Psoas muscle (tissue), 8 donors: ENCODE measurements at regions of chr3 and their contacts with region 1.

Region 1: GRCh38 chr3:9749645-9750555 is at the start of gene OGG1:
- DNase-seq: peak; percentile 97 to 98
- ATAC-seq: peak; percentile 98 to 99 (median 98)
- H3K4me3 ChIP-seq: peak within 1 kb of the TSS; percentile 79
- H3K27ac ChIP-seq: peak within 1 kb of the TSS; percentile 86
- H3K4me1 ChIP-seq: peaks cover 19% of the 10 kb centered on the region
- H3K27me3 ChIP-seq: no peaks in the 10 kb centered on the region
- CTCF ChIP-seq: no peak
- total RNA-seq, gene OGG1: 6.9 to 9.5 (median 8.1) TPM

Region 2: DNA sequence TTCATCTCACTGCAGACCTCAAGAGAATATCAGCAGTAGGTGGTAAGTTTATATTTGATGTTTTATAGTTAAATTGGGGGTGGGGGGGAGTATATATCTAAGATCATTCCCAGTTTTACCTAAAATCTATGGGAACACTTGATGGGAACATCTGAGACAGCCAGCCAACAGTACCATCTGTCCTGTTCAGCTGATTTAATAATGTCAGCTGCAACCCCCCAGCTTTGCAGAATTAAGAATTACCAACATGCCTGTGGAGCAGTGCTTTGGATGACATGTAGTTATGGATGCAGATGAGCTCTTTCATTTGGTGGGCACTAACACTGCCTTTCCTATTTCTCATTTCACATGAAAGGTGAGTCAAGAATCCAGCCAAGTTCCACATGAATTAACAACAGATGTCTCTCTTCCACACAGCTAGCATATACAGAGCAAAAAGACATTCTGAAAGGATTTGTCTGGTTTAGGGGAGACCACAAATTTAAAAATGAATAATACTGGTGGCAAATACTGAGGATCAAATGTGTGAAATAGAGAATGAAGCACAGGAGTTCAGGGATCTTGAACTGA is 276.3 kb before region 1 on chr3:
- intact Hi-C with region 1: no loop called
- DNase-seq: no peak
- ATAC-seq: no peak
- H3K4me3 ChIP-seq: no peak overlapping the region
- H3K27ac ChIP-seq: no peak overlapping the region
- H3K4me1 ChIP-seq: no peaks in the 10 kb centered on the region
- H3K27me3 ChIP-seq: no peaks in the 10 kb centered on the region
- CTCF ChIP-seq: no peak

Region 3: DNA sequence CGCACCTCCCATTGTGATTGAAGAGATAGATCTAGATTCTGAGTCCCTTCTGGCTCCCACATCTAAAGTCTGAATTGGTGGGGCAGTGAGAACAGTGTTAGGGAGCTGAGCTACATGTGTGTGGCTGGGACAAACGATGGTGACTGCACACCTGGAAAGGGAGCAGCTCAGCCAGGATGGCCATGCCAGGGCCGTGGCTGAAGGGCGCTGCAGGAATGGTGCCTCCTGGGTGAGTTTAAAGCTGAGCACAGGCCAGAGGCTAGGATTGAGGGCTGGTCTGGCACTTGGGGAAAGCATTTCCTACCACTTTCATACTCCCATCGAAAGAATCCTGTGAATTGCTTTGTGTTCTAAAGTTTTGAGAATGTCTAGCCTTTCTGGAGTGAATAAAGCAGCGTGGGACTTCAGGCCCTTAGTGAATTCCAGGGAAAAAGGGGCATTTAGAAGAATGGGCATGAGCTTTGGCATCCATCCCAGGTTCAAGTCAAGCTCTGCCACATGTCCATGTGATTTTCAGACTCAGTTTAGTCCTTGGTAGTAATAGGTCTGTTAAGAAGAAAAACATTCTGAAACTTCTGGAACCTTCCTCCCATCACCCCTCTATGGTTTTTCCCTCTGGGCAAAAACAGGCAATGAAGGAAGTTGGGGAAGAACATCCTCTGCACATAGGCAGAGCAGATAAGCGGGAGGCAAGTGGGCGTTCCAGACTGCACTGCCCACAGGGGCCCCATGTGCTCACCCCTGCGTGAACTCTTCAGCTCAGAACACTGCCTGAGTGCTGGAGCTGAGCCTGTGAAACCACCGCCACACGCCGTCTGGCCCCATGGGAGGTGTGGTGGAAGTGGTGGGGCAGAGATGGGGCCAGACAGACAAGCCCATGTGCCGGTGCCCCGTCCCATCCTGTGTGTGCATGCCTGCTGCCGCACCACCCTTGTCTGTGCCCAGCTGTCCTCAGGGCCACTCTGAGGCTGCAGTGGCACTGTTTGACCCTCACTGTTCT is 59.1 kb before region 1 on chr3:
- intact Hi-C with region 1: no loop called
- DNase-seq: no peak
- ATAC-seq: no peak
- H3K4me3 ChIP-seq: no peak overlapping the region
- H3K27ac ChIP-seq: no peak overlapping the region
- H3K4me1 ChIP-seq: no peaks in the 10 kb centered on the region
- H3K27me3 ChIP-seq: no peaks in the 10 kb centered on the region
- CTCF ChIP-seq: no peak

Region 4: GRCh38 chr3:9731206-9732079 is 18.5 kb before region 1 on chr3 and contains the start of gene BRPF1:
- intact Hi-C with region 1: loop called in 1 of 2 experiments (anchors 1 kb)
- DNase-seq: peak; percentile 100
- ATAC-seq: peak; percentile 97 to 98 (median 98)
- H3K4me3 ChIP-seq: peak within 1 kb of the TSS; percentile 95
- H3K27ac ChIP-seq: peak within 1 kb of the TSS; percentile 100
- H3K4me1 ChIP-seq: peaks cover 17% of the 10 kb centered on the region
- H3K27me3 ChIP-seq: no peaks in the 10 kb centered on the region
- CTCF ChIP-seq: no peak
- total RNA-seq, gene BRPF1: 9.9 to 16.1 (median 12.5) TPM

Region 5: DNA sequence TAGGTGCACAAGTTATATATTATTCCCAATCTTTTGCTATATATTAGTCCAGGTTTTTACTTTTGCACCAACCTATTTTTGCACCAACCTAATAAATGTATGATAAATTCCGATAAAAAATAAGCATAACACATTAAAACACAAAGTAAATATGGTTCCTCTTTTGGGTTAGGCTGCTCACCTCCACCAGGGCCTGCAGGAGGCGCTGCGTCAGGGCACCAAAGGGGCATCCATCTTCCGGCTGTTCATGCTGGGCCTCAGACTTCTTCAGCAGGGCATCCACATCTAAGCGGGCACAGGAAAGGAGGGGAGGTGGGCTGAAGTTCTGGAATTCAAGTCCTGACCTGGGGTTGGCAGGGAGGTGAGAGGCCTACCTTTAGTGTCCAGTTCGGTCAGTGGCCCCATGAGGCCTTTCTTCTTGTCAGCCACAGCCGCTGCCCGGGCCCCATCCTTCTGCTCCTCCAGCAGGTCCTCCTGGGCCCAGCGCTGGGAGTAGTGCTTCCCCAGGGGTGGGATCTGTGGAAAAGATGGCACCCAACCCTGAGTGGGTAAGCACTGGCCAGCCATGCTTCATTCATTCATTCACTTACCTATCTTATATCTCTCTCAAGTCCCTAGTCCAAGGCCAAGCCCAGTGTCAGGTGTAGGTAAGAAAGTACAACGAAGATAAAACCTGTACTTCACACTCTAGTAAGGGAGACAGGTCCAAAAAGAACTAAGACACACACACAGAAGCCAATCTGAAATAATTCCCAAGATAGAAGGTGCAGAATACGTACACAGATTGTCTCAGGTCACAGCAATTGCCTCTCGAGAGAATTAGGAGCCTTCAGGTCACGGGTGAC is 37.1 kb after region 1 on chr3:
- intact Hi-C with region 1: loop called in 1 of 2 experiments (anchors 5 kb)
- DNase-seq: no peak
- ATAC-seq: no peak
- H3K4me3 ChIP-seq: no peak overlapping the region
- H3K27ac ChIP-seq: no peak overlapping the region
- H3K4me1 ChIP-seq: peaks cover 12% of the 10 kb centered on the region
- H3K27me3 ChIP-seq: no peaks in the 10 kb centered on the region
- CTCF ChIP-seq: no peak

Region 6: DNA sequence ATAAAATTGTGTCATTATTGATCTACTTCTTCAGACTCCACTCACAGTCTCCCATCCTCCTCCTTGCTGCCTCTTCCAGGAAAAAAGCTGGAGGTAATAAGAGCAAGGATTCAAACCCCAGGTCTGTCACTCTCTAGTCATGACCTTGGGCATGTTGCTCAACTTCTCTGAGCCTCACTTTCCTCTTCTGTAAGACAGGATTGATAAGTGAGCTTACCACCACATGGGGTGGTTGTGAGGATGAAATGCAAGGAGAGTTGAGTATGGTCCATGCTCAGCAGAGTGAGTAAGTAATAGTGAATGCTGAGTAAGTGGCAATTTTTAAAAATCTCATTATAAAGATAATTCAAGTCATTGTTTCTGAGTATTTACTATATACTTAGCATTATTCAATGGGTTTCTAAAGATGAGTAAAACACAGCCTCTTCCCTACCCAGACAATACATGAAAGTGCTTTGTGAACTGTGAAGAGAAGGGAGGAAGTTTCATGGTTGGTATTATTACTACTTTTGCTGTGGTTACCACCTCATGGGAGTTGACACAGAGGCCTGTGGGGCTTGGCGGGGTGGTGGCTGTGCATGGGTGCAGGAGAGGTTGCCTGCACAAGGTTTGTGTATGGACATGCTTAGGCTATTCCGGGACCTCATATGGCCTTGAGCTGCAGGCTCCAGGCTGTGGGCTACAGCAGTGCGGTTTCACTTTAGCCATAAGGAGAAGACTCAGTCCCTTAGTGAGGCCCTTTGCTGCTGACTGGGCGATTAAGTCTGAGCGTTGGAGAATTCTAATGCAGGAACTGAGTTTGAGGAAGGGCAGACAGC is 1096.1 kb after region 1 on chr3:
- intact Hi-C with region 1: no loop called
- DNase-seq: no peak
- ATAC-seq: no peak
- H3K4me3 ChIP-seq: no peak overlapping the region
- H3K27ac ChIP-seq: no peak overlapping the region
- H3K4me1 ChIP-seq: no peaks in the 10 kb centered on the region
- H3K27me3 ChIP-seq: peaks cover 0 to 20% (median 6%) of the 10 kb centered on the region in 3 donors
- CTCF ChIP-seq: no peak